ENCODE measurements at regions of chr2 and their contacts with region 1.

Region 1: GRCh38 chr2:100260712-100261620 is 61.3 kb downstream of the LONRF2 start:
- DNase-seq: peak; percentile 62 to 67 (median 64)
- ATAC-seq: peak; percentile 66
- H3K4me3 ChIP-seq: no peak overlapping the region
- H3K27ac ChIP-seq: no peak overlapping the region
- H3K4me1 ChIP-seq: no peaks in the 10 kb centered on the region
- H3K27me3 ChIP-seq: no peaks in the 10 kb centered on the region
- CTCF ChIP-seq: peak in 6 of 7 experiments; percentile 29 to 69 (median 63)
- POLR2A ChIP-seq: no peak

Region 2: DNA sequence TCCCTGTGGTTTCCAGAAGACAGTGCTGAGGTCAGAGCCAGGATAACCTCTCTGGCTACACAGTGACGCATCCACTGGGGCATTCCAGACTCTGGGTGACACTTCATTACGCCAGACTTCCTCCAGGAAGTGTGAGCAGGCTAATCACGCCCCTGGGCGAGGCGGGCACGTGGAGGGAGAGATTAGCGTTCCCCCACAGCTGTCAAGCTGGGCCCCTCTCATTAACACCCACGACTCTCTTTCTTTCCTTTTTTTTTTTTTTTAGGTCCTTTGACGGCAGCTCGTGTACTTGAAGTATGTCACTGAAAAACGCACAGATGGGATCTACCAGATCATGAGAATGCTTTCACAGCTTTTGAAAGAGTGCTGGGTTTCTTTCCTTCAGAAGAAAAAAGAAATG is 393.2 kb before region 1 on chr2:
- intact Hi-C with region 1: no loop called
- DNase-seq: no peak
- ATAC-seq: no peak
- H3K4me3 ChIP-seq: no peak overlapping the region
- H3K27ac ChIP-seq: no peak overlapping the region
- H3K4me1 ChIP-seq: no peaks in the 10 kb centered on the region
- H3K27me3 ChIP-seq: no peaks in the 10 kb centered on the region
- CTCF ChIP-seq: no peak
- POLR2A ChIP-seq: no peak

Region 3: GRCh38 chr2:100381240-100381639 is 120.3 kb after region 1 on chr2:
- intact Hi-C with region 1: loop called (anchors 2 kb)
- DNase-seq: peak; percentile 84 to 90 (median 88)
- ATAC-seq: peak; percentile 86
- H3K4me3 ChIP-seq: no peak overlapping the region
- H3K27ac ChIP-seq: no peak overlapping the region
- H3K4me1 ChIP-seq: no peaks in the 10 kb centered on the region
- H3K27me3 ChIP-seq: no peaks in the 10 kb centered on the region
- CTCF ChIP-seq: peak; percentile 78 to 95 (median 91)
- POLR2A ChIP-seq: no peak